ENCODE measurements at regions of chr5 and their contacts with region 1.

Region 1: GRCh38 chr5:188488-189481 is 2.5 kb upstream of the LRRC14B start:
- DNase-seq: peak; percentile 76
- H3K4me3 ChIP-seq: no peak overlapping the region
- H3K27ac ChIP-seq: no peak overlapping the region
- H3K4me1 ChIP-seq: no peaks in the 10 kb centered on the region
- H3K27me3 ChIP-seq: peaks cover 5 to 8% of the 10 kb centered on the region in 2 experiments
- CTCF ChIP-seq: peak; percentile 92 to 99
- POLR2A ChIP-seq: no peak

Region 2: GRCh38 chr5:106587-106986 is 82.2 kb before region 1 on chr5:
- CTCF ChIA-PET with region 1: no interaction called
- POLR2A ChIA-PET with region 1: no interaction called
- dilution Hi-C with region 1: no loop called
- intact Hi-C with region 1: no loop called
- DNase-seq: no peak
- H3K4me3 ChIP-seq: no peak overlapping the region
- H3K27ac ChIP-seq: no peak overlapping the region
- H3K4me1 ChIP-seq: no peaks in the 10 kb centered on the region
- H3K27me3 ChIP-seq: peaks cover 0 to 6% of the 10 kb centered on the region in 2 experiments
- CTCF ChIP-seq: no peak
- POLR2A ChIP-seq: no peak

Region 3: DNA sequence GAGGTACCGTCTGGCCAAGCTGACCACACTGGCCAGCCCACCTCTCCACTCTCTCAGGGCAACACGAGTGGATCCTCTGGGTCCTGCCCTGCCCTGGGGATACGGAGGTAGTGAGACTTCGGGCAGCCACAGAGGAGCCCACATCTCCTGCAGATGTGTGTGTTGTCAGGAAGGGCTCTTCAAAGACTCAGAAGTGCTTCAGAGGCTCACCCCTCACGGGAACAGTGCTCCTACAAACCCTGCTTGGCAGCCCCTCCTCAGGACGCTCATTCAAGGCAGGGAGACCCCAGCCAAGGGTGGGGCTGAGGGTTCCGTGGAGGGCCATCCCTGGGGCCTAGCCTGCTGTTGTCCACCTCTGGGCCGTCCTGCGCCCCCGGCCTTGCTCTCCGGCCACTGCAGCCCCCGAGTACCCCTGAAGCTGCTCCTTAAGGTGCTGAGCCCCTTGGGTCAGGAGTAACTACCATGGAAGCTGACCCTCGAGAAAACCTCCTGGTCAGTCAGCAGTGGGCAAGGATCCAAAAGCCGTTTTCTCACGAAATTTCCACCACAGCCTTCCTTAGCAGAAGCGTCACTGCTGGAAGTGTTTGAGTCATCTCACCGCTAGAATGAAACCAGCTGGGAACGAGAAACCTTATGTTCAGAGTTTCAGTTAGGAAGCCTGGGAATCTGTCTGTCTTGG is 20.7 kb before region 1 on chr5:
- CTCF ChIA-PET with region 1: interaction called, 11 read pairs
- POLR2A ChIA-PET with region 1: no interaction called
- dilution Hi-C with region 1: no loop called
- intact Hi-C with region 1: no loop called
- DNase-seq: peak; percentile 17
- H3K4me3 ChIP-seq: no peak overlapping the region
- H3K27ac ChIP-seq: no peak overlapping the region
- H3K4me1 ChIP-seq: no peaks in the 10 kb centered on the region
- H3K27me3 ChIP-seq: no peaks in the 10 kb centered on the region
- CTCF ChIP-seq: no peak
- POLR2A ChIP-seq: no peak

Region 4: DNA sequence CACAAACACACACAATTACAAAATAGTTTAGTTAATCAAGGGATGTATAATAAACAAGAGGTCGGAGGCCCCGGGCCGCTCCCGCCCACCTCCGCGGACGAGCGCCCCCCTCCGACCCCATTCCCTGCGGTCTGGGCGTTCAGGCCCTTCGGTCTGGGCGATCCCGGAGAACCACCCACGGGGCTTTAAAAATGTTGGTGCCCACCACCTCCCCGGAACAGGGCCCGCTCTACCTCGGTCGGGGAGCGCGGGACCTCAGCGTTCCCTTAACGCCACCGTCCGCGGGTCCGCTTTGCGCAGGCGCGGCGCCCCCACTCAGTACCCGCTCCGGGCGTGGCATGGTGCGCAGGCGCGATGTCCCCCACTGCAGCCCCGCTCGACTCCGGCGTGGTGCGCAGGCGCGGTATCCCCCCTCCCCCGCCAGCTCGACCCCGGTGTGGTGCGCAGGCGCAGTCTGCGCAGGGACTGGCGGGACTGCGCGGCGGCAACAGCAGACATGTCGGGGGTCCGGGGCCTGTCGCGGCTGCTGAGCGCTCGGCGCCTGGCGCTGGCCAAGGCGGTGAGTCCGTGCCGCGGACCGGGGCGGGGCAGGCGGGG is 29.2 kb after region 1 on chr5 and contains the starts of genes CCDC127 and SDHA:
- CTCF ChIA-PET with region 1: interaction called, 36 read pairs
- POLR2A ChIA-PET with region 1: interaction called, 4 read pairs
- dilution Hi-C with region 1: no loop called
- intact Hi-C with region 1: loop called (anchors 1 kb)
- DNase-seq: peak; percentile 97
- H3K4me3 ChIP-seq: peak within 1 kb of the TSS; percentile 86 to 95 (median 94)
- H3K27ac ChIP-seq: peak within 1 kb of the TSS; percentile 70
- H3K4me1 ChIP-seq: peaks cover 37% of the 10 kb centered on the region
- H3K27me3 ChIP-seq: no peaks in the 10 kb centered on the region
- CTCF ChIP-seq: peak; percentile 29 to 56
- POLR2A ChIP-seq: peak; percentile 65
- total RNA-seq, gene CCDC127: 5.3 and 6.3 TPM in 2 replicates
- total RNA-seq, gene SDHA: 142 and 153 TPM in 2 replicates

Region 5: DNA sequence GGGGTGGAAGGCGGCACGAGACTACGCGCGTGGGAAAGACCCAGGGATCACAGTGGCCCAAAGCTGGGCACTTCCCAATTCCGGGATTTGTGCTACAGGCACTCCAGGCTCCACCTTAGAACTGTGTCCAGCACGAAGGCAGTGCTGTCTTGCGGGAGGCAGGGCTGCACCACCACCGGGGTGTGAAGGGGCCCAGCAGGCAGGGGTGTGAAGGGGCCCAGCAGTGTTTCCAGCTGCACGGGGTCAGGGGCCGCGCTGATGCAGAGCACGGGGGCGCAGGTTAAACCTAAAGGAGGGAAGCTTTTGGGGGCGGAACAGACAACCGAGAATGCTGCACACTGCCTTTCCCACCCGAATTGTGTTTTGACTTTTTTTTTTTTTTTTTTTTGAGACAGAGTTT is 81.6 kb after region 1 on chr5:
- CTCF ChIA-PET with region 1: interaction called, 5 read pairs
- POLR2A ChIA-PET with region 1: interaction called, 3 read pairs
- dilution Hi-C with region 1: no loop called
- intact Hi-C with region 1: loop called (anchors 1 kb)
- DNase-seq: no peak
- H3K4me3 ChIP-seq: no peak overlapping the region
- H3K27ac ChIP-seq: no peak overlapping the region
- H3K4me1 ChIP-seq: peaks cover 12% of the 10 kb centered on the region
- H3K27me3 ChIP-seq: no peaks in the 10 kb centered on the region
- CTCF ChIP-seq: no peak
- POLR2A ChIP-seq: no peak

Region 6: GRCh38 chr5:343461-344401 is 154.9 kb after region 1 on chr5:
- CTCF ChIA-PET with region 1: interaction called, 3 read pairs
- POLR2A ChIA-PET with region 1: no interaction called
- dilution Hi-C with region 1: no loop called
- intact Hi-C with region 1: loop called (anchors 1 kb)
- DNase-seq: peak; percentile 45
- H3K4me3 ChIP-seq: peak overlapping the region in 1 of 3 experiments; percentile 29
- H3K27ac ChIP-seq: no peak overlapping the region
- H3K4me1 ChIP-seq: peaks cover 2% of the 10 kb centered on the region
- H3K27me3 ChIP-seq: no peaks in the 10 kb centered on the region
- CTCF ChIP-seq: no peak
- POLR2A ChIP-seq: no peak

Region 7: DNA sequence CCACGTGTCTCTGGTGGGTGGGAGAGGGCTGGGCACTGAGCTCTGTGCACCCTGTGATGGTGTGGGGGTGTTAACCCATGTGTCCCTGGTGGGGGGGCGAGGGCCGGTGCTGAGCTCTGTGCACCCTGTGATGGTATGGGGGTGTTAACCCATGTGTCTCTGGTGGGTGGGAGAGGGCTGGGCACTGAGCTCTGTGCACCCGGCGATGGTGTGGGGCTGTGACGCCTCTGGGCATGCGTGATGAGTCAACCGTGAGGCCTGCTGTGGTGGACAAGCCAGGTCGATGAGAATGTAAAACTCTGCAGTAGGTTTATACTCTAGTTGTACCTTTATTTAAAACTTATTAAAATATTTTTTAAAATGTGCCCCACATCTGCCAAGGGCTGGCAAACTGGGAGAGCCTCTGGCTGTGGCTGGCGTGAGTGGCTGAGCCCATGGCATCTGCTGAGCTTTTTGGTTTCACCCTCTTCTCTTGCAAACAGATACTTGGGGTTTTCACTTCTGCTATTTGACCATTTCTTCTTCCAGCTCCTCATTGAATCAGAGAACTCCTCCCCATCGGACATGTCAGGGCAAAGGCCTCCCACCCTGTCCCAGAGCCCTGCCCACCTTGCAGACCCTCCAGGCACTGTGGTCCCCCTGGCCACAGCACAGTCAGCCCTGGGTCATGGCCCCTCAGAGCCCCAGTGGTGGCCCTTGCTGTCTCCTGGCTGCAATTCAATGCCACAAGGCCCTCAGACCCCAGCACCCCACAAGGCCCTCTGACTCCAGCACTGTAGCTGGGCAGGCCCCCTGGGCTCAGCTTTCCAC is 235.7 kb after region 1 on chr5:
- CTCF ChIA-PET with region 1: interaction called, 21 read pairs
- POLR2A ChIA-PET with region 1: no interaction called
- dilution Hi-C with region 1: no loop called
- intact Hi-C with region 1: no loop called
- DNase-seq: no peak
- H3K4me3 ChIP-seq: no peak overlapping the region
- H3K27ac ChIP-seq: no peak overlapping the region
- H3K4me1 ChIP-seq: no peaks in the 10 kb centered on the region
- H3K27me3 ChIP-seq: no peaks in the 10 kb centered on the region
- CTCF ChIP-seq: no peak
- POLR2A ChIP-seq: no peak

Region 8: DNA sequence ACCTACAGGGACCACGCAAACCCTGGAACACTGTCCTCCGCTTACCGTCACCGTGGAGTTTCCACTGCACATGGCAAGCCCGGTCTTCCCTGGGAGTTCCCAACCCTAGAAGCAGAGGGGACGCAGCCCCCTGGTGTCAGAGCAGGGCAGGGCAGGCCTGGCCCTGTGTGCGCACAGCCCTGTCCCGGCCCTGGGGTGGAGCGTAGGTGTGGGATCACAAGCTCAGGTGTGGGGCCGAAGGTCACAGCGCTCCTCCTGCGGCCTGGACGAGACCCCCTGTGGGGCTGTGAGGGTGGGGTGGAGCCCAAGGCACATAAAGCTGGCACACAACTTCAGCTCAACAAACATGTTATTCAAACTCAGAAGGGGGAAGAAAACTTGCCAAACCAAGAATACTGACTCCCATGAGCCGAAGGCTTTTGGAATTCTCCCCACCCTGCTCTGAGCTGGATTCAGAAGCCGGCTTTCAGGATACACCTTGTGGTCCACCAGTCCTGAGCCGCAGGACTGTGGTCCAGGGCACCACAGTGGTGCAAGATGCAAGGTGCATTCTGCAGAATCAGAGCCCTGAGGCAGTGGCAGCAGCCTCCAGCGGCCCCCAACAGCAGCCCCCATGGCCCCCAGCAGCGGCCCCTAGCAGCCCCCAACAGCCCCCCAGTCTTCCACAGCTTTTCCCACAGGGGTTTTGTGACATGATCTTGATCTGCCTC is 242.4 kb after region 1 on chr5:
- CTCF ChIA-PET with region 1: interaction called, 21 read pairs
- POLR2A ChIA-PET with region 1: no interaction called
- dilution Hi-C with region 1: no loop called
- intact Hi-C with region 1: loop called (anchors 2 kb)
- DNase-seq: peak; percentile 50
- H3K4me3 ChIP-seq: no peak overlapping the region
- H3K27ac ChIP-seq: no peak overlapping the region
- H3K4me1 ChIP-seq: no peaks in the 10 kb centered on the region
- H3K27me3 ChIP-seq: no peaks in the 10 kb centered on the region
- CTCF ChIP-seq: peak; percentile 79 to 92
- POLR2A ChIP-seq: no peak